ENCODE measurements at regions of chr9 and their contacts with region 1.

Region 1: DNA sequence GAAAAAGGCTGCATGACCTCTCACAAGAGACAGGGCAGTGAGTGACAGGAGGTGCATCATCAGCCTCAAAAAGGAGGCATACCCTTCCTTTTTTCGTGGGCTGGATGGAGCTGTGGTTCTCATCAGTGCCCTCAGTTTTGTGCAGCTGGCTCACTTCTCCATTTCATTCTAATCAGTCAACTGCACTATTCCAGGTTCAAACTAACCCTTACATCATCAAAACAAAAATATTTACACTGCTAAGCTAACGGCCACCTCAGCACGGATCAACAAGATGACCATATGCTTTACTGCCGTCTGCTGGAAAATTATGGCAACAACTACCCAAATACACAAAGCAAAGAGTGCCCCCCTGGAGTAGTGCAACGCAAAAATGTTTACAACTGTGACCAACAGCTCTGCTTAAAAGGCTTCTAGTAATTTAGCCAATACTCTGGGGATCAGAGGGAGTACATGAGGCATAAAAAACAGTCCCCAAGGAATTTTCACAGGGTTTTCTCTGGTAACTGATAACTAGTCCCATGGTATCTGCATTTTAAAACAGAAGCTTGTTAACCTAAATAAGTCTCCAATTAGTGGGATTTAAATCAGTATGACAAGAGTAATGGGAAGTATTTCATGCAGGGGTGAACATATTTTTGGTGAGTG is 10.8 kb downstream of the KCNV2 start:
- DNase-seq: peak; percentile 28 to 41
- ATAC-seq: peak; percentile 91 to 94
- H3K4me3 ChIP-seq: no peak overlapping the region
- H3K27ac ChIP-seq: peak overlapping the region; percentile 24 to 34 (median 28)
- H3K4me1 ChIP-seq: peaks cover 11 to 19% of the 10 kb centered on the region in 2 donors
- H3K27me3 ChIP-seq: no peaks in the 10 kb centered on the region
- CTCF ChIP-seq: peak; percentile 61 to 76 (median 66)
- POLR2A ChIP-seq: no peak

Region 2: GRCh38 chr9:2132484-2133082 is 595.5 kb before region 1 on chr9:
- in situ Hi-C with region 1: loop called in 1 of 4 experiments (anchors 25 kb)
- intact Hi-C with region 1: loop called (anchors 5 kb)
- DNase-seq: no peak
- ATAC-seq: peak in 1 of 2 donors; percentile 61
- H3K4me3 ChIP-seq: no peak overlapping the region
- H3K27ac ChIP-seq: no peak overlapping the region
- H3K4me1 ChIP-seq: peaks cover 32 to 57% of the 10 kb centered on the region in 2 donors
- H3K27me3 ChIP-seq: no peaks in the 10 kb centered on the region
- CTCF ChIP-seq: peak; percentile 48 to 83 (median 76)
- POLR2A ChIP-seq: no peak

Region 3: GRCh38 chr9:2241836-2242741 is 486.0 kb before region 1 on chr9:
- in situ Hi-C with region 1: loop called in 1 of 4 experiments (anchors 25 kb)
- intact Hi-C with region 1: loop called (anchors 5 kb)
- DNase-seq: peak; percentile 47 to 62
- ATAC-seq: peak; percentile 79 to 92
- H3K4me3 ChIP-seq: peak overlapping the region; percentile 53 to 66 (median 62)
- H3K27ac ChIP-seq: peak overlapping the region; percentile 52 to 72 (median 60)
- H3K4me1 ChIP-seq: peaks cover 5 to 16% of the 10 kb centered on the region in 2 donors
- H3K27me3 ChIP-seq: no peaks in the 10 kb centered on the region
- CTCF ChIP-seq: peak in 1 of 5 experiments; percentile 28
- POLR2A ChIP-seq: no peak

Region 4: GRCh38 chr9:2494562-2494961 is 233.5 kb before region 1 on chr9:
- in situ Hi-C with region 1: no loop called
- intact Hi-C with region 1: loop called (anchors 10 kb)
- DNase-seq: no peak
- ATAC-seq: no peak
- H3K4me3 ChIP-seq: no peak overlapping the region
- H3K27ac ChIP-seq: peak overlapping the region in 1 of 4 donors; percentile 10
- H3K4me1 ChIP-seq: peaks cover 16 to 29% of the 10 kb centered on the region in 2 donors
- H3K27me3 ChIP-seq: no peaks in the 10 kb centered on the region
- CTCF ChIP-seq: no peak
- POLR2A ChIP-seq: no peak

Region 5: DNA sequence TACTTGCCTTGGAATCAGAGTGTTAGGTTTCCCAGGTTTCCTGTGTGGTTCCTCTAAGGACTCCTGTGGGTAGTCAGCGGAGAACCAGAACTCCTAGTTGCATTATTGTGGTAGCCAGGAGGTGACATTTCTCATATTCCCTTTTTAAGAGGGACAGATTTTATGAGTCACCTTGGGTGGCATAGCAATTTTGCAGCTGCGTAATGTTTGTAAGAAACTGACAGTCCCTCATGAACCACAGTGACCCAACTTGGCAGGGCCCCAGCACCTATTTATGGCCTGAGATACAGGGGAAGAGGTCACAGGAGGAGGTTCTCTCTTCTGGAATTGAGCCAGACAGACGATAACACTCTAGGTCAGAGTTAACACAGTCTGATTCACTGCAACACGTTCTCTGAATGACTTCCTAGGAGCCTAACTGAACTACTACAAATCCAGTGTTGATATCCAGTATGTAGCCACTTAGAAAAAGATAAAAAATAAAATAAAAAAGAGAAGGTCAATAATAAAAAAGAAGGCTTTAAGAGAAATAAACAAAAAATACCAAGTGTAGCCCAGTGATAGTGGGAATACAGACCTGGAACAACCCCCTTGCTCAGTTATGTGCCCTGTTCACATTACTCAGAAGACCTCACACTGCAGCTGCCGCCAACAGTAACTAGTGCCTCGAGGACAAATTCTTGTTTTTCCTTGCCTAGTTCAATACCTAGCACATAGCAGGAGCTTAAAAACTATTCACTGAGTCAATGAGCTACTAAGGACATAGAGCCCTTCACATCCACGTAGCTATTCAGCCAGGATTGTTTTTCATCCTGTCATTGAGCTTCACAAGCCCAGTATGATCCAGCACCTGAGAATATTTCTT is 157.2 kb before region 1 on chr9:
- in situ Hi-C with region 1: no loop called
- intact Hi-C with region 1: loop called (anchors 2 kb)
- DNase-seq: peak; percentile 96 to 100
- ATAC-seq: peak; percentile 90 to 97
- H3K4me3 ChIP-seq: peak overlapping the region in 1 of 4 donors; percentile 5
- H3K27ac ChIP-seq: peak overlapping the region; percentile 81 to 84 (median 82)
- H3K4me1 ChIP-seq: peaks cover 17 to 39% of the 10 kb centered on the region in 2 donors
- H3K27me3 ChIP-seq: no peaks in the 10 kb centered on the region
- CTCF ChIP-seq: no peak
- POLR2A ChIP-seq: no peak

Region 6: DNA sequence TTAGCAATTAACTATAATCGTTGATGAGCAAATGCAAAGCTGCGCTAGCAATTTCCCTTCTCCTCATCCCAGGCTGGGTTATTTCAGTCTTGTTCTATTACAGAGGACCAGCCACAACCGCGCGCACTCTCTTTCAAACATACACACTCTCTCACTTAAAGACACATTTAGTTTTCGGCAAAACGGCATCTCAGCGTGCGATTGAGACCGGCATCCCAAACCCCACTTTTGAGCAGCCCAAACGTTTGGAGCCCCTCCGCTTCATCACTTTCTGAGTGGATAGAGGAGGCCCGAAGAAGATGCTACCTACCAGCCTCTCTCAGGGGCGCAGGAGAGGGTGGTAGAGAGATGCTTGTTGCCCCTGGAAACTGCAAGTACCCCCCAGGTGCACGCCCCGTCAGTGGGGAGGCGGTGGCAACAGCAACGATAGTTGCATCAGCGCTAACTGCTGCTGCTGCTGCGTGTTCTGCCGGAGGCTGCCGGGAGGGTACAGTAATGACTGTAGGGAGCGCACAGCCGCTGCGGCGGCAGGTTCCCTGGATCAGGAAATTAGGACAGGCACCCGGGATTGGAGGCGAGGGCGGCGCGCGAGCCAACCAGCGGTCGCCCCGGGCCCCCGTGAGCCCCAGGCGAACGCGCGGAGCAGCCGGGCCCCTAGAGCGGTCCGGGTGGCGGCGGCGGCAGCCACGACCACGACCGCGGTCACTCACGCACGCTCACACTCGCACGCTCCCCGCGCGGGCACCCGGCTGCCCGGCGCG is 107.0 kb before region 1 on chr9:
- in situ Hi-C with region 1: loop called in 1 of 4 experiments (anchors 10 kb)
- intact Hi-C with region 1: loop called (anchors 2 kb)
- DNase-seq: peak; percentile 71 to 85
- ATAC-seq: peak; percentile 56 to 59
- H3K4me3 ChIP-seq: peak overlapping the region; percentile 72 to 94 (median 90)
- H3K27ac ChIP-seq: peak overlapping the region; percentile 95 to 98 (median 97)
- H3K4me1 ChIP-seq: peaks cover 16 to 29% of the 10 kb centered on the region in 2 donors
- H3K27me3 ChIP-seq: no peaks in the 10 kb centered on the region
- CTCF ChIP-seq: peak in 4 of 5 experiments; percentile 21 to 40 (median 32)
- POLR2A ChIP-seq: peak; percentile 69 to 70

Region 7: GRCh38 chr9:2662496-2662895 is 65.6 kb before region 1 on chr9:
- in situ Hi-C with region 1: no loop called
- intact Hi-C with region 1: loop called (anchors 2 kb)
- DNase-seq: peak in 1 of 2 donors; percentile 40
- ATAC-seq: peak in 1 of 2 donors; percentile 45
- H3K4me3 ChIP-seq: no peak overlapping the region
- H3K27ac ChIP-seq: peak overlapping the region; percentile 76 to 92 (median 86)
- H3K4me1 ChIP-seq: peaks cover 29 to 43% of the 10 kb centered on the region in 2 donors
- H3K27me3 ChIP-seq: no peaks in the 10 kb centered on the region
- CTCF ChIP-seq: peak in 3 of 5 experiments; percentile 24 to 33 (median 26)
- POLR2A ChIP-seq: no peak